ENCODE measurements at regions of chr5 and their contacts with region 1.

Region 1: GRCh38 chr5:82225525-82226172 is 52.5 kb downstream of the RPS23 start:
- DNase-seq: peak in 4 of 5 donors; percentile 15 to 49 (median 46)
- ATAC-seq: peak; percentile 67 to 84 (median 79)
- H3K4me3 ChIP-seq: no peak overlapping the region
- H3K27ac ChIP-seq: no peak overlapping the region
- H3K4me1 ChIP-seq: peaks cover 0 to 3% (median 0%) of the 10 kb centered on the region in 12 donors
- H3K27me3 ChIP-seq: no peaks in the 10 kb centered on the region
- CTCF ChIP-seq: peak; percentile 71 to 88 (median 81)
- POLR2A ChIP-seq: no peak

Region 2: GRCh38 chr5:81425569-81425968 is 800.1 kb before region 1 on chr5:
- intact Hi-C with region 1: loop called in 8 of 10 experiments (anchors 2 to 10 kb)
- DNase-seq: no peak
- ATAC-seq: peak in 3 of 4 donors; percentile 35 to 62 (median 59)
- H3K4me3 ChIP-seq: no peak overlapping the region
- H3K27ac ChIP-seq: peak overlapping the region in 4 of 12 donors; percentile 1 to 28 (median 7)
- H3K4me1 ChIP-seq: peaks cover 4 to 26% (median 12%) of the 10 kb centered on the region in 12 donors
- H3K27me3 ChIP-seq: no peaks in the 10 kb centered on the region
- CTCF ChIP-seq: peak; percentile 56 to 82 (median 66)
- POLR2A ChIP-seq: no peak

Region 3: DNA sequence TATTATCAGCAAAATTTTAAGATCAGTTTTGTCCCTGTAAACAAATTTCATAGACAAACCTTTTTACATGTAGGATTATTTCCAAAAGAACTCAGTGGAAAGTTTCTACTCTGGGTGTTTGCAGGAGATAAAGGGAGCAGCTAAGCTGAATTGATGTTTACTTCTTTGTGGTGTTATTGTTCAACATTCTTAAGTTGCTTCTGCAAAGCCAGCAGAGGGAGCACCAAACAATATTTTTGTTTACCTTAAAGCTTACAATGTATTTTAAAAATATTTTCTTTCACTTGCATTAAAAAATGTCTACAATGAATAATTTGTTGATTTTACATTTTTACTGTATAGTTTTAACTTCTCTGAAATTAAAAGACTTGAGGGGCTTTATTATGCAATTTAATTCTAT is 118.4 kb before region 1 on chr5:
- intact Hi-C with region 1: loop called in 1 of 10 experiments (anchors 10 kb)
- DNase-seq: no peak
- ATAC-seq: no peak
- H3K4me3 ChIP-seq: no peak overlapping the region
- H3K27ac ChIP-seq: peak overlapping the region in 1 of 12 donors; percentile 46
- H3K4me1 ChIP-seq: peaks cover 0 to 25% (median 16%) of the 10 kb centered on the region in 12 donors
- H3K27me3 ChIP-seq: no peaks in the 10 kb centered on the region
- CTCF ChIP-seq: peak in 10 of 12 donors; percentile 15 to 61 (median 46)
- POLR2A ChIP-seq: no peak

Region 4: GRCh38 chr5:82174128-82174918 is 51.3 kb before region 1 on chr5:
- intact Hi-C with region 1: loop called in 3 of 10 experiments (anchors 5 to 10 kb)
- DNase-seq: peak; percentile 31 to 58 (median 50)
- ATAC-seq: peak; percentile 64 to 87 (median 81)
- H3K4me3 ChIP-seq: no peak overlapping the region
- H3K27ac ChIP-seq: peak overlapping the region in 1 of 12 donors; percentile 34
- H3K4me1 ChIP-seq: peaks cover 0 to 14% (median 0%) of the 10 kb centered on the region in 12 donors
- H3K27me3 ChIP-seq: no peaks in the 10 kb centered on the region
- CTCF ChIP-seq: peak; percentile 29 to 72 (median 52)
- POLR2A ChIP-seq: no peak

Measured in heart left ventricle (tissue), 16 donors.